ENCODE measurements at regions of chr17 and their contacts with region 1.

Region 1: GRCh38 chr17:45228763-45229539 is 7.3 kb downstream of the FMNL1 start:
- DNase-seq: peak; percentile 68
- H3K4me3 Mint-ChIP-seq: peak overlapping the region; percentile 97
- H3K27ac Mint-ChIP-seq: peak overlapping the region; percentile 100
- H3K4me1 Mint-ChIP-seq: peaks cover 84% of the 10 kb centered on the region
- H3K27me3 Mint-ChIP-seq: no peaks in the 10 kb centered on the region

Region 2: GRCh38 chr17:45148183-45149036 is 80.5 kb before region 1 on chr17 and contains the start of gene HEXIM1:
- CTCF ChIA-PET with region 1: interaction called, 13 read pairs
- POLR2A ChIA-PET with region 1: interaction called, 4 read pairs
- DNase-seq: peak; percentile 99
- H3K4me3 Mint-ChIP-seq: peak within 1 kb of the TSS; percentile 98
- H3K27ac Mint-ChIP-seq: peak within 1 kb of the TSS; percentile 100
- H3K4me1 Mint-ChIP-seq: peaks cover 56% of the 10 kb centered on the region
- H3K27me3 Mint-ChIP-seq: no peaks in the 10 kb centered on the region
- total RNA-seq, gene HEXIM1: 30.5 TPM

Region 3: DNA sequence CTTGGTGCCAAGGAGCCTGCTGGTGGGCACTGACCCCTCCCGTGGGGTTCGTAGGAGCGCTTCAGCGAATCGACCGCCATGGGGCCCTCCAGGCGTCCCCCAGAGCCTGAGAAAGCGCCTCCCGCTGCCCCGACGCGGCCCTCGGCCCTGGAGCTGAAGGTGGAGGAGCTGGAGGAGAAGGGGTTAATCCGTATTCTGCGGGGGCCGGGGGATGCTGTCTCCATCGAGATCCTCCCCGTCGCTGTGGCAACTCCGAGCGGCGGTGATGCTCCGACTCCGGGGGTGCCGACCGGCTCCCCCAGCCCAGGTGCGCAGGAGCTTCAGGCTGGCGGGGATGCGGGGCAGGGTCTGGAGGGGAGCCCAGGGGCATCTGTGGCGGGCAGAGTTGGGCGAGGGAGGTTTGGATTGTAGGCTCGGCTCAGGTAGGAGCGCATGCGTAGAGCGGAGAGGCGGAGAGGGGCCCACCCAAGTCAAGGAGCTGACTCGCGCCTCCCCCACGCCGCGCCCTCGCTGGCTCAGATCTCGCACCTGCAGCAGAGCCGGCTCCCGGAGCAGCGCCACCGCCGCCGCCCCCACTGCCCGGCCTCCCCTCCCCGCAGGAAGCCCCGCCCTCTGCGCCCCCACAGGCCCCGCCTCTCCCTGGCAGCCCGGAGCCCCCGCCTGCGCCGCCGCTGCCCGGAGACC is 12.5 kb after region 1 on chr17:
- CTCF ChIA-PET with region 1: interaction called, 39 read pairs
- POLR2A ChIA-PET with region 1: no interaction called
- DNase-seq: no peak
- H3K4me3 Mint-ChIP-seq: no peak overlapping the region
- H3K27ac Mint-ChIP-seq: no peak overlapping the region
- H3K4me1 Mint-ChIP-seq: peaks cover 52% of the 10 kb centered on the region
- H3K27me3 Mint-ChIP-seq: no peaks in the 10 kb centered on the region

Region 4: GRCh38 chr17:45247429-45248131 is 18.6 kb after region 1 on chr17:
- CTCF ChIA-PET with region 1: interaction called, 39 read pairs
- POLR2A ChIA-PET with region 1: interaction called, 5 read pairs
- DNase-seq: peak; percentile 97
- H3K4me3 Mint-ChIP-seq: peak overlapping the region; percentile 83
- H3K27ac Mint-ChIP-seq: peak overlapping the region; percentile 92
- H3K4me1 Mint-ChIP-seq: peaks cover 71% of the 10 kb centered on the region
- H3K27me3 Mint-ChIP-seq: no peaks in the 10 kb centered on the region

Region 5: DNA sequence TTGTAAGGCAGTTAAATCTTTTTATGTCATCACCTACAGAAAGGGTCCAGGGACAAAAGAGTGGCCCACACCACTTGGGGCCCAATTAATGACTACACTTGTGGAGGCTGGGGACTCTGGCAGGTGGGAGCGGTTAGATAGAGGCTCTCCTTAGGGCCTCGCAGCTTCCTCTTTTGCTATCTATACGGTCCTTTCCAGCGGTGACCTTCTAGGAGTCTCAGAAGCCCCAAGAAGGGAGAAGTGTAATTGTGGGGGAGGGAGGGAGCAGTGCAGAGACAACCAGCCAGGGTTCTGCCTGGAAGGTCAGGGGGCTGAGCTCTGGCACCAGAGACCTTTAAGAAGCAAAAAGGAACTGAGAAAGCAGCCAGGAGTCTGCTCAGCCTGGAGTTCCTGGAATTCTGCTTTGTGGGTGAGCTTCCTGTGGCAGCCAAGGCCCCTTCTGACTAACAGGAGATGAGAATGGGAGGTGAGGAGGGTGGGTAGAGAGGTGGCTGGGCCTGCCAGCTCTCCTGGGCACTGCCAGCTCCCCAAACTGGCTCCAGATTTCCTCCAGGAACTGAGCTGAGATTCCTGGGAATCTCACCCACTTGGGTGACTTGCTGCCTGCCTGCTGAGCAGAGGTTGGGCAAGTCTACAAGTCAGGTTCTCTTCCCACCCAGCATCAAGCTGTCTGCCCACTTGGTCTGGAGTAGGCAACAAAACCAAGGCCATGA is 104.2 kb after region 1 on chr17:
- CTCF ChIA-PET with region 1: no interaction called
- POLR2A ChIA-PET with region 1: no interaction called
- DNase-seq: no peak
- H3K4me3 Mint-ChIP-seq: no peak overlapping the region
- H3K27ac Mint-ChIP-seq: no peak overlapping the region
- H3K4me1 Mint-ChIP-seq: peaks cover 22% of the 10 kb centered on the region
- H3K27me3 Mint-ChIP-seq: no peaks in the 10 kb centered on the region

Measured in activated CD4-positive, alpha-beta T cell treated with anti-CD3 and anti-CD28 coated beads, Interleukin-2, amount 10 ng/mL, durations not matched to agents 7 days and 5 days (primary cell).